GM13976 (cell line): ENCODE measurements at regions of chr4 and their contacts with region 1.

Region 1: GRCh38 chr4:83252782-83253405 is 31.7 kb downstream of the COQ2 start:
- DNase-seq: peak; percentile 72
- CTCF ChIP-seq: peak; percentile 76

Region 2: GRCh38 chr4:82890901-82891706 is 361.8 kb before region 1 on chr4 and contains the start of gene SEC31A:
- in situ Hi-C with region 1: loop called (anchors 25 kb)
- DNase-seq: peak; percentile 95
- CTCF ChIP-seq: no peak

Region 3: DNA sequence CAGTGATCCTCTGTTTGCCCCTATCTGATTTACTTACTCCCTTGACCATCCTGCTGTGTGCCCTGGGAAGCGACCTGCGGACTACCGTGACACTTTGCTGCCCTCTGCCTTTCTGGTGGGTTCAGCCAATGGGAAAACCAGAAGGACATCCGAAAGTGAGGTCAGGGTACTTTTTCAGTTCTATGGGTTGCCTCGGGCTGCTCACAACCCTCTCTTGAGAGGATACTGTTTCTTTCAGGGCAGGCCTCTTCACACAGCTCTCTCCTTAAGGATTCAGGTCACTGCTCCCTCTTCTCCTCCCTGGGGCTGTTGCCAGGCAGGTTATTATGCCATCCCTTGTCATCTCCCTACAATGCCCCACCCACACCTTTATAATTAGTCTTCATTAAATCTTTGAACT is 159.8 kb before region 1 on chr4:
- in situ Hi-C with region 1: no loop called
- DNase-seq: no peak
- CTCF ChIP-seq: no peak

Region 4: DNA sequence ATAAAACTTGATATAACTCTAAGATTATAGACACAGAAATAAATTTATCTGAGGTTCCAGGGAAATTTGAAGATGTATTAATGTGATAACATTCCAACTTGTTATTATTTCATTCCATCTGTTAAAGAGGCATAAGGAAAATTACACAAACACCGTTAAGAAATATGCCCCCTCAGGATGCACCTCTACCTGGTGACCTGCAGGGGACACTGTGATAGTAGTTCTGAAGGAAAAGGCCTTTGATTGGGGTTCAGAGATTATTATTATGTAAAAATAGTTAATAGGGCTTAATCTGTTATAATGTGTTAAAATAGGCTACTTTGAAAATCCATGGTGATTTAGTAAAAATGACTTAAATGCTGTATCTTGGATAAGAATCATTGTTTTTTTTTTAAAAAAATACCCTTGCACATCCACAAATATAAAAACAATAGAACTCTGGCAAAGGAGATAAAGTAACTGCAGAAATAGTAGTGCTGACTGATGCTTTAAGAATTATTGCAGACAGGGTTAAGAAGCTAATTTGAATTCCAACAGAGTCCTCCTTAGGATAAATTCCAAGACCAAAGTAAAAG is 238.1 kb after region 1 on chr4:
- in situ Hi-C with region 1: no loop called
- DNase-seq: peak; percentile 53
- CTCF ChIP-seq: peak; percentile 68